Activated CD4-positive, alpha-beta T cell treated with anti-CD3 and anti-CD28 coated beads for 36 hours (primary cell): ENCODE measurements at regions of chr17 and their contacts with region 1.

Region 1: GRCh38 chr17:35587074-35587971 is at the start of gene AP2B1:
- DNase-seq: peak; percentile 96
- ATAC-seq: peak; percentile 94
- H3K4me3 Mint-ChIP-seq: peak within 1 kb of the TSS; percentile 98
- H3K27ac Mint-ChIP-seq: peak within 1 kb of the TSS; percentile 98
- H3K4me1 Mint-ChIP-seq: peaks cover 25% of the 10 kb centered on the region
- H3K27me3 Mint-ChIP-seq: no peaks in the 10 kb centered on the region
- total RNA-seq, gene AP2B1: 166 to 184 TPM

Region 2: DNA sequence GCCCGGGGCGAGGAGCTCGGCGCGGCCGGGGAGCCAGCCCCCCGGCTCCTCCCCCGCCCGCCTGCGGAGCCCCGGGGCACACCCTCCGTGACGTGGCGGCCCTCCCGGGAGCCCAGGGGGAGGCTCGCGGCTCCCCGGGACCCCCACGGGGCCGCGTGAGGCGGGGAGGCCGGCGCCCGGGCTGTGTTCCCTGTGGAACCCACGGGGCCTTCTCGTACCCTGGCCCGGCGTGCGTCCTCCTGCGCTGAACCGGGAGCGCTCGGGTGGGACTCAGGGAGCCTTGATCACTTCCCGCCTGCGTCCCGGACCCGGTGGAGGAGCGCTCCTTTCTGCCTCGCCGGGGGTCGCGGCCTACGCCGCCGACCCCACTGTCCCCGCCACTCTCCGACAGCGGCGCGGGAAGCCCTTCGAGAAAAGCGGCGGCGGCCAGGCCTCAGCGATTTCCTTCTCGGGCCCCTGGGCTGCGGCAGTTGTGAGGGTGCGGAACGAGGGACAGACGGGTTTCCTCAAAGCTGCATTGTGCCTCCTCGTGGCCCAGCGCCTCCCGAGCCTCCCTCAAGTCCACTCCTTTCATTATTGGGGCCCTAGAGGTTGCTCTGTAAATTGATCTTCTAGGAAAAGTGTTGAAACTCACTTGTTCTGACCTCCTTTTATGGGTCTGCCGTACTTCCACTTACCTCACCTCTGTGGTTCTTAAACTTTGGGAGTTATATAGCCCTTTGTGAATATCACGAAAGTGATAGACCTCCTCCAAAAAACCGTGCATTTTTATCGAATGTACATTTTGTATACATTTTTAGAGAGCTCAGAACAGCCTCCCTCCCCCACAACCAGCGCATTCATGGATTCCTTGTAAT is 606.4 kb before region 1 on chr17:
- CTCF ChIA-PET with region 1: no interaction called
- POLR2A ChIA-PET with region 1: no interaction called
- intact Hi-C with region 1: loop called in 1 of 2 experiments (anchors 2 kb)
- DNase-seq: peak; percentile 82
- ATAC-seq: peak; percentile 82
- H3K4me3 Mint-ChIP-seq: peak overlapping the region; percentile 86
- H3K27ac Mint-ChIP-seq: peak overlapping the region; percentile 93
- H3K4me1 Mint-ChIP-seq: peaks cover 50% of the 10 kb centered on the region
- H3K27me3 Mint-ChIP-seq: no peaks in the 10 kb centered on the region

Region 3: GRCh38 chr17:35214631-35215273 is 372.6 kb before region 1 on chr17:
- CTCF ChIA-PET with region 1: no interaction called
- POLR2A ChIA-PET with region 1: no interaction called
- intact Hi-C with region 1: loop called in 1 of 2 experiments (anchors 5 kb)
- DNase-seq: peak; percentile 54
- ATAC-seq: peak; percentile 67
- H3K4me3 Mint-ChIP-seq: peak overlapping the region; percentile 49
- H3K27ac Mint-ChIP-seq: peak overlapping the region; percentile 80
- H3K4me1 Mint-ChIP-seq: peaks cover 85% of the 10 kb centered on the region
- H3K27me3 Mint-ChIP-seq: no peaks in the 10 kb centered on the region

Region 4: GRCh38 chr17:35486920-35487732 is 100.2 kb before region 1 on chr17:
- CTCF ChIA-PET with region 1: no interaction called
- POLR2A ChIA-PET with region 1: no interaction called
- intact Hi-C with region 1: loop called in 1 of 2 experiments (anchors 1 kb)
- DNase-seq: peak; percentile 92
- ATAC-seq: peak; percentile 71
- H3K4me3 Mint-ChIP-seq: peak overlapping the region; percentile 82
- H3K27ac Mint-ChIP-seq: peak overlapping the region; percentile 91
- H3K4me1 Mint-ChIP-seq: peaks cover 36% of the 10 kb centered on the region
- H3K27me3 Mint-ChIP-seq: peaks cover 11% of the 10 kb centered on the region

Region 5: GRCh38 chr17:35716897-35717465 is 129.7 kb after region 1 on chr17:
- CTCF ChIA-PET with region 1: no interaction called
- POLR2A ChIA-PET with region 1: no interaction called
- intact Hi-C with region 1: no loop called
- DNase-seq: no peak
- ATAC-seq: no peak
- H3K4me3 Mint-ChIP-seq: no peak overlapping the region
- H3K27ac Mint-ChIP-seq: no peak overlapping the region
- H3K4me1 Mint-ChIP-seq: peaks cover 2% of the 10 kb centered on the region
- H3K27me3 Mint-ChIP-seq: no peaks in the 10 kb centered on the region

Region 6: DNA sequence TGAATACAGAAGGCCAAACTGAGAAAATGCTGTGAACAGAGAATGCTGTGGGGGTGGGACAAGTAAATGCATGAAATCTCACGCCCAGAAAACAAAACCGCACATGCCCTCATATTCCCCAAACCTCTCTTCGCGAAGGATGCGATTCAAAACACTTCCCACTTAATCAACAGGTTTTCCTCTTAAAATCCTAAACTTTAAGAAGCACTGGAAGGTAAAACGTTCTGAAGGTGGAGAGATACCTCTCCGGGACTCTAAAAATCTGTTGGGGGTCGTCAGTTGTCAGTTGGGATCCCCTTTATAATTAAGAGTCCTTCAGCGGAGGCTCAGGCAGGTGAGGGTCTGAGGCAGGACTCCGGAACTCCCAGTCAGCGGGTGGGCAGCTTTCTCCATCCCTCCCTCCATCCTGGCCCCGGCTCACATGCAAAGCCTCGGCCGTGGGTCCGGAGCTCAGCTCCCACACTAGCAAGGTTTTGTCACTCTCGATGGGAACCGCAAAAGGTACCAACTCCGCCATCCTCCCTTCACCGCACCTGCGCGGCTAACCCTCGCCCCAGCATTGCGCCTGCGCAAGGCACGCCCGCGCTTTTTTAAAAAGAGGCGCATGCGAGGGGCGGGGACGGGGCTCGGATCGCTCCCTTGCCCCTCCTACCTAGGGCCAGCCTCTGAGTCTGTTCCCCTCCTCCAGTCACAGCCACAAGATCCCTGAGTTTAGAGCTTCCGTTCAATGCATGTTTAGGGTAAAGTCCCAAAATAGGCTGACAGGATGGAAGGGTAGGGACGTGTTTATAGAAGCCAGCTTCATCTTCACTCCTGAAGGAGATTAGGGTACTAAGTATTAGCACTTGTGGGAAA is 343.1 kb after region 1 on chr17 and contains the start of gene RDM1:
- CTCF ChIA-PET with region 1: no interaction called
- POLR2A ChIA-PET with region 1: no interaction called
- intact Hi-C with region 1: loop called in 1 of 2 experiments (anchors 1 kb)
- DNase-seq: peak; percentile 95
- ATAC-seq: peak; percentile 100
- H3K4me3 Mint-ChIP-seq: peak within 1 kb of the TSS; percentile 80
- H3K27ac Mint-ChIP-seq: peak within 1 kb of the TSS; percentile 62
- H3K4me1 Mint-ChIP-seq: peaks cover 22% of the 10 kb centered on the region
- H3K27me3 Mint-ChIP-seq: no peaks in the 10 kb centered on the region
- total RNA-seq, gene RDM1: 4.4 to 6.5 TPM